Activated CD8-positive, alpha-beta T cell treated with anti-CD3 and anti-CD28 coated beads, Interleukin-2, amount 10 ng/mL, durations not matched to agents 7 days and 5 days (primary cell): ENCODE measurements at regions of chr12 and their contacts with region 1.

Region 1: DNA sequence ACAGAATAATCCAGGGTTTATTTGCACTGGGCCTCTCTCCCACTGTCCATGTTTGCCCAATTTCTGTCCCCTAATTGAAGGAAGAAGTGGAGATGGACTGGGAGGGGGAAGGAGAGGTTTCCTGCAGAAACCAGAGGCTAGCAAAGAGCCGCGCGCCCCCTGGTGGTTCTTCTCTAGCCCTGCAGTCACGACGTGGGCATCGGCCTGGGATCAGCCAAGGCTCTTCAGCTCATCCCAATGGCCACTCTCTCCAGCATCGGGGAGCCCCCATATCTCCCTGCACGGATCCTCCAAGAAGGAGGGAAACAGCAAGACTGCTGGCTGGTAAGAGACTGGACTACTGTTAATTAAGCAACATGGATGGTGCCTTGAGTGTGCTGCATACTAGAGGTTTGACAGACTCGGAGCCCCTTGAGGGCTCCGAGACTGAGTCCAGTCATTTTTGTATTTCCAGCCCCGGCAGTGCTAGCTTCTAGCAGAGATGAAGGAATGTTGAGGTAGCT is 18.7 kb downstream of the ZBTB39 start:
- DNase-seq: peak; percentile 82
- ATAC-seq: peak; percentile 86
- H3K4me3 Mint-ChIP-seq: no peak overlapping the region
- H3K27ac Mint-ChIP-seq: no peak overlapping the region
- H3K4me1 Mint-ChIP-seq: peaks cover 10% of the 10 kb centered on the region
- H3K27me3 Mint-ChIP-seq: peaks cover 14% of the 10 kb centered on the region

Region 2: DNA sequence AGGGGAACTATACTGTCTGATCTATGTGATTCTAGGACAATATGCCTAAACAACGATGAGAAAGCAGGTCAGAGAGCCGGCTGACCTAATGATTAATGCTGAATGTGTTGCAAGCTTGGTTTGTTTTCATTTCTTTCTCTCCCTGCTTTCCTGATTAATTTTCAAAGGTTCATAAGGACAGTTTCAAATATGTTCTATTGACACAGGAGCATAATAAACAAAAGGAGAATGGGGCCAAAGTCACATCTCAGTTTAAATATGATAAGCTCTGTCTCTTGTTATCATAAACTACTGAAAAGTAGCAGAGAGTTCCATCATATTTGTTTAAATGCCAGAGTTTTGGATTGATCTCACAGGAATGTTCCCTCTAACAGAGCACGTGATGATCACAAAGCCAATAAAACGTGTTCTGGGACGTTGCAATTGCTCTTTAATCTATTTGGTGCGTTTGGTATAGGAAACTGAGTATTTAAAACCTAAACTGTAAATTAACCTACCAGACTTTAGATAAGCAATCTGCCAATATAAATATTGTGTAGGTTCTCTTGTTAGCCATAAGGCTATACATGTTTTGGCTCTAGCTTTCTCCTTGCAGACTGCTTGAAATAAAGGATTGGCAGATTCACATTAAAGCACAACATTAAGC is 228.2 kb before region 1 on chr12:
- CTCF ChIA-PET with region 1: interaction called, 69 read pairs
- POLR2A ChIA-PET with region 1: interaction called, 3 read pairs
- DNase-seq: no peak
- ATAC-seq: no peak
- H3K4me3 Mint-ChIP-seq: no peak overlapping the region
- H3K27ac Mint-ChIP-seq: no peak overlapping the region
- H3K4me1 Mint-ChIP-seq: peaks cover 8% of the 10 kb centered on the region
- H3K27me3 Mint-ChIP-seq: peaks cover 6% of the 10 kb centered on the region

Region 3: DNA sequence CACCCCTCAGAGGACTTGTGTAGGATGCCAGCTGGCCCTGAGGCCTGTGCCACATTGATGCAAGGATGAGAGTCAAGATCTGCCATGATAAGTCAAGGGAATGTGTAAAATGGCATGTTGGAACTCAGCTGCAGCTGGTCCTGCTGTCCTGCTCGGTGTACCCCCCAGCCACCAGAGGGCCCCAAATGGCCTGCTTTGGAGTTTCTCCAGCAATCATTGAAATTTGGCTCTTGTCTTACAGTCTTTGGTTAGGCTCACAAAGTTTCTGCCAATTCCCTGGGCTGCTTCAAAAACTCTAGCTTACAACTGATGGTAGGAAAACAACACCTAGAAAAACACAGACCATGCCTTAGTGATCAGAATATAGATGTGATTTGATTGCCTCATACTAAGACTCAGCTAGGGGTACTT is 147.7 kb before region 1 on chr12:
- CTCF ChIA-PET with region 1: interaction called, 15 read pairs
- POLR2A ChIA-PET with region 1: no interaction called
- DNase-seq: peak; percentile 51
- ATAC-seq: peak; percentile 47
- H3K4me3 Mint-ChIP-seq: no peak overlapping the region
- H3K27ac Mint-ChIP-seq: no peak overlapping the region
- H3K4me1 Mint-ChIP-seq: peaks cover 13% of the 10 kb centered on the region
- H3K27me3 Mint-ChIP-seq: peaks cover 2% of the 10 kb centered on the region